Activated CD8-positive, alpha-beta memory T cell treated with anti-CD3 and anti-CD28 coated beads, Interleukin-2, amount 10 ng/mL, durations not matched to agents 7 days and 5 days (primary cell): ENCODE measurements at regions of chr7 and their contacts with region 1.

Region 1: GRCh38 chr7:23055582-23056178 is 41.8 kb upstream of the HYCC1 start:
- DNase-seq: peak; percentile 76
- ATAC-seq: peak; percentile 95
- H3K4me3 Mint-ChIP-seq: no peak overlapping the region
- H3K27ac Mint-ChIP-seq: no peak overlapping the region
- H3K4me1 Mint-ChIP-seq: peaks cover 13% of the 10 kb centered on the region
- H3K27me3 Mint-ChIP-seq: no peaks in the 10 kb centered on the region

Region 2: GRCh38 chr7:22559829-22560489 is 495.7 kb before region 1 on chr7:
- CTCF ChIA-PET with region 1: interaction called, 26 read pairs
- DNase-seq: peak; percentile 79
- ATAC-seq: peak; percentile 72
- H3K4me3 Mint-ChIP-seq: no peak overlapping the region
- H3K27ac Mint-ChIP-seq: no peak overlapping the region
- H3K4me1 Mint-ChIP-seq: peaks cover 36% of the 10 kb centered on the region
- H3K27me3 Mint-ChIP-seq: peaks cover 38% of the 10 kb centered on the region

Region 3: DNA sequence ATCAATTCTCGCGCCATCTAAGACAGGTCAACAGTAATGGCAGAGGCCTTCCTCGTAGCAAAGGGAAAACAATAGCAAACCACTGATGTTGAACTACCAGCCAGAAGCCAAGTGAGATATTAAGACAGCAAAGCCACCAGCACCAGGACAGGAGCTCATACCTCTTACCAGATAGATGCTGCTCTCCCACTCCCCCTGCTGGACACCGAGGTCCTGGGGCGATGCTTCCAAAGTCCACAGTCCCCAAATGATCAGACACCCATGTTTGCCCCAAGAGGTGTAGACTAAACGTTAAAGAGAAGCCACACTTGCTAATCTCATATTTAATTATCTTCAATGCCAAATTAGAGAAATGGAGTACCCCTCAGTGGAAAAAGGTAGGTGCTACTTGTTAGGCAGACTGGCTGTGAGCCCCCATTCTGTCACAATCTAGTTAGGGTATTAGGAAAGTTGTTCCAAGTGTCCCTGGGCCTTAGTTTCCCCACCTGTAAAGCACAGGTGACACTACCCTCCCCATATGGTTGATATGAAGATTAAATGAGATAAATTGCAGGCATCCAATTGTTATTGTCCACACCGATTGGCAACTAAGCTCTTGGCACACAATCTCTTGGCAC is 273.0 kb before region 1 on chr7:
- CTCF ChIA-PET with region 1: interaction called, 11 read pairs
- DNase-seq: peak; percentile 82
- ATAC-seq: peak; percentile 91
- H3K4me3 Mint-ChIP-seq: no peak overlapping the region
- H3K27ac Mint-ChIP-seq: no peak overlapping the region
- H3K4me1 Mint-ChIP-seq: no peaks in the 10 kb centered on the region
- H3K27me3 Mint-ChIP-seq: peaks cover 15% of the 10 kb centered on the region

Region 4: GRCh38 chr7:22855049-22855392 is 200.7 kb before region 1 on chr7:
- CTCF ChIA-PET with region 1: interaction called, 16 read pairs
- DNase-seq: no peak
- ATAC-seq: peak; percentile 15
- H3K4me3 Mint-ChIP-seq: peak overlapping the region; percentile 93
- H3K27ac Mint-ChIP-seq: peak overlapping the region; percentile 94
- H3K4me1 Mint-ChIP-seq: peaks cover 43% of the 10 kb centered on the region
- H3K27me3 Mint-ChIP-seq: peaks cover 3% of the 10 kb centered on the region

Region 5: DNA sequence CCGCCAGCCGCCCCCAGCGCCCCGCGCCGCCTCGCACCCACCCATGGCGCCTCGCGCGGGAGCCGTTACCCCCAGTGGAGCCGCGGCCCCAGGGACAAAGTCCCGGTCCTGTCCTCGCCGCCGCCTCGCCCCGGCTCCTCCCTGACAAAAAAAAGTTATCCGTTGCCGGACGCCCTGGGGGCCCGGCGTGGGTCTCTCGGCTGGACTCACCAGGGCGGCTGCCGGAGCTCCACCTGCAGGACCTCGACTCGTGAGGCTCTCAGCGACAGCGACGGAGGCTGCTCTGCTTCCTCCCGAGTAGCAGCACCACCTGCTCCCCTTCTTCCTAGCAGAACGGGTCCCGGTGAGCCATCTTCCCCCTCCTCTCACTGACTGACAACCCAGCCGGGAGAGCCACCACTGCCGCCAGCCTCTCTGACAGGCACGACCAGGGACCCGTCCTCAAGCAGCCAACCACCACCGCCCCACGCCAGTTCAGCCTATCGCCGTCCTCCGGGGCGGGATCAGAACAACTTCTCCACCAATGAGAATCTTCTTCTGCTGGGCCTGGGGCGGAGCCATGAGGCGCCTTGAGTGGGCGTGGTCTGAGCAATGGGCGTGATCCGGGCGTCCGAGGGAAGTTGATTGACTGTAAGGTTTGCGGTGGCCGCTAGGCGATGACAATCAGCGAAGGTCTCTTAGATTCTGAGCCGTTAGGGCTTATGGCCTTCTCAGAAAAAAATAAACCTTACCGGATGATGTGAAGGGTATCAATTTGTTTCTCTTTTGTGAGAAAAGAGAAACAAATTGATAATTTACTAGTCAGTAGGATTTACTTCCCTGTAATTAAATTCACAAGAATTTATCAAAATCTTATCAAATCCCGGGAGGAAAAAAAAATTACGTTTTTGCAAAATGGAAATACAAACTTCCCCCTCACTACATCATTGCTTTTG is 41.7 kb before region 1 on chr7 and contains the start of gene HYCC1:
- CTCF ChIA-PET with region 1: interaction called, 15 read pairs
- DNase-seq: peak; percentile 99
- ATAC-seq: peak; percentile 99
- H3K4me3 Mint-ChIP-seq: no peak within 1 kb of the TSS
- H3K27ac Mint-ChIP-seq: peak within 1 kb of the TSS; percentile 87
- H3K4me1 Mint-ChIP-seq: peaks cover 35% of the 10 kb centered on the region
- H3K27me3 Mint-ChIP-seq: no peaks in the 10 kb centered on the region
- total RNA-seq, gene HYCC1: 72.6 to 125 TPM